ENCODE measurements at regions of chr1 and their contacts with region 1.

Region 1: DNA sequence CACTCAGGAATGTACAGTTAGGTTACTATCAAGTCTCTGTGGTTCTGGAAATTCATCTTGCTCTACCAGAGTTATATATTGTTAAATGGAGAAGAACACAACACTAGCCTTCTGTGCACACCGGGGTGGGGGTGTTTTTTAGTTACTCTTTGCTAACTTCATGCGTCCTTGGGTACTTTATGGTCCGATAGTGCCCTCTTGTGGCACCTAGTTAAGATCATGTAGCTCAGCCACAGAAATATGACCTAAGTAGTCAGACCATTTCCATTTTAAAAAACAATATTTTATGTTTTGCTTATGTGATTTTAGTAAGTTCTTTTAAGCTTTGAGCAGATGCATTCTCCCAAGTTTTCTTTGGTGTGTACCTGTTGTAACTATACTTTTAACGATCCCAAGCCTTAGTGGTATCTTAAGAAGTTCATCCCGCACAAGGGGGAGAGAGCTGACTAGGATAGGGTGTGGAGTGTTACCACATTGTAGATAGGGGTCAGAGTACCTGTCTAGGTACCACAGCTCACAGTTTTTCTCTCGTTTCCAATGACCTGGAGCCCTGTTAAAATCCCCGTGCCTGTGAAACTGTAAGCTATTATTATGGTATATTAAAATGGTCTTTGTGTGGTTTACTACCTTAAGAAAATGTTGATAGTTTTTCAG is 20.6 kb upstream of the SH3D21 start:
- DNase-seq: peak; percentile 41
- ATAC-seq: peak; percentile 96
- H3K4me3 ChIP-seq: no peak overlapping the region
- H3K27ac ChIP-seq: no peak overlapping the region
- H3K4me1 ChIP-seq: no peaks in the 10 kb centered on the region; the same call in 1 of the 2 replicates
- H3K27me3 ChIP-seq: no peaks in the 10 kb centered on the region
- CTCF ChIP-seq: peak; percentile 56 to 78 (median 67)
- EP300 ChIP-seq: no peak
- POLR2A ChIP-seq: no peak
- RAD21 ChIP-seq: peak; percentile 84

Region 2: GRCh38 chr1:36008546-36009197 is 276.9 kb before region 1 on chr1:
- CTCF ChIA-PET with region 1: no interaction called
- POLR2A ChIA-PET with region 1: no interaction called
- RAD21 ChIA-PET with region 1: no interaction called
- SMC1A ChIA-PET with region 1: no interaction called
- in situ Hi-C with region 1: no loop called
- intact Hi-C with region 1: no loop called
- DNase-seq: no peak
- ATAC-seq: no peak
- H3K4me3 ChIP-seq: no peak overlapping the region
- H3K27ac ChIP-seq: no peak overlapping the region
- H3K4me1 ChIP-seq: no peaks in the 10 kb centered on the region
- H3K27me3 ChIP-seq: no peaks in the 10 kb centered on the region
- CTCF ChIP-seq: no peak
- EP300 ChIP-seq: no peak
- POLR2A ChIP-seq: no peak
- RAD21 ChIP-seq: no peak

Region 3: DNA sequence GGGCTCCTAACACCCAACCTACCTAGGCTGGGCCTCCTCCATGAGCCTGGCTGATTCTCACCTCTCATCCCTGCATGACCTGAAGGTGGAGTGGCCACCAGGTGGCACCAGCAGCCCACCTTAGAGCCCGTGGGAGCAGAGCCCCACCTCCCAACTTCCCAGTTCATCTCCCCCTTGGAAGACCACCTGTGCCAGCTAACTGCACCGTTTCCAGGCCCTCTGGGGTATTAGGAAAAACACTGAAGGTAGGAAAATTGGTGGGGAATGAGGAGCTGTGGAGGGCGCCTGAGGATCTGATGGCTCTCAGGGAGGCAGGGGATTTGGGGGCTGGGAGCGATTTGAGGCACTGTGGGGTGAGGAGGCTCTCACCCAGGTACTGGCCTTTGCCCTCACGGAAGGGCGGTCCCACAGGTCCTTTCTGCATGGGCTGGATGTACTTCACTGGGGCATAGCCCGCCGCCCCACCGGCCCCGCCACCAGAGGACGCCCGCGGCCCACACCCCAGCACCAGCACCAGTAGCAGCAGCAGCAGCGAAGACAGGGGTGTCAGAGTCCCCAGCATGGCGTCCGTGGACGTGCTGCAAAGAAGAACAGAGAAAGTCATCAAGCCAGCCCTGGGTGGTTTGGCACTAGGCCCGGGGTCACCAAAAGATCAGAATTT is 185.8 kb before region 1 on chr1:
- CTCF ChIA-PET with region 1: interaction called, 8 read pairs
- POLR2A ChIA-PET with region 1: no interaction called
- RAD21 ChIA-PET with region 1: interaction called, 7 read pairs
- SMC1A ChIA-PET with region 1: interaction called, 8 read pairs
- in situ Hi-C with region 1: loop called (anchors 10 kb)
- intact Hi-C with region 1: loop called (anchors 2 kb)
- DNase-seq: no peak
- ATAC-seq: peak; percentile 96
- H3K4me3 ChIP-seq: no peak overlapping the region
- H3K27ac ChIP-seq: no peak overlapping the region
- H3K4me1 ChIP-seq: no peaks in the 10 kb centered on the region
- H3K27me3 ChIP-seq: no peaks in the 10 kb centered on the region
- CTCF ChIP-seq: peak; percentile 82 to 88 (median 86)
- EP300 ChIP-seq: no peak
- POLR2A ChIP-seq: no peak
- RAD21 ChIP-seq: peak; percentile 95

Region 4: DNA sequence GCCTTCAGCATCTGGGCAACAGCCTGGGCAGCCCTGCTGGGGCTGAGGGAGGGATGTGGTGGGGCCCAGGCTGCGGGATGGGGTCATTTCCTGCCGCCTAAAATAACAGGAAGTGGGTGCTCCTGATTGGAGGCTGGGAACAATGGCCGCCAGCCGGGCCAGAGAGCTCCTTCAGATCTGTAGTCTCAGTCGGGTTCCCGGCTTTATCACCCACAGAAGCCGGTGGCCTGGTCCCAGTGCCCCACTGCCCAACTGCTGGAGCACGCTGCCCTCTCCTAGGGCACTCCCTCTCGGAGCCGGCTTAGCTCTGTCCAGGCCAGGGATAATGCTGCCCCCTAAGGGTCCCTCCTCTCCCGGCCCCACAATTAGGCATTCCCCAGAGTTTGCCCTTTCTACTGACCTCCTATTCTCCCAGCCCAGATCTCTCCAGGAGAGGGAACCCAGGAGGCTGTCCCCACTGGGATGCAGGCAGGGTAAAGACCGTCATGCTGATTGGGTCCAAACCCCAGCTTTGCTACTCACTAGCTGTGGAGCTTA is 124.6 kb before region 1 on chr1:
- CTCF ChIA-PET with region 1: interaction called, 31 read pairs
- POLR2A ChIA-PET with region 1: interaction called, 5 read pairs
- RAD21 ChIA-PET with region 1: interaction called, 12 read pairs
- SMC1A ChIA-PET with region 1: interaction called, 10 read pairs
- in situ Hi-C with region 1: no loop called
- intact Hi-C with region 1: no loop called
- DNase-seq: no peak
- ATAC-seq: peak; percentile 76
- H3K4me3 ChIP-seq: peak overlapping the region; percentile 85
- H3K27ac ChIP-seq: peak overlapping the region; percentile 95
- H3K4me1 ChIP-seq: peaks cover 51% of the 10 kb centered on the region
- H3K27me3 ChIP-seq: no peaks in the 10 kb centered on the region
- CTCF ChIP-seq: peak; percentile 32 to 49 (median 44); a peak in 3 of 6 replicates
- EP300 ChIP-seq: no peak
- POLR2A ChIP-seq: peak; percentile 82
- RAD21 ChIP-seq: no peak

Region 5: DNA sequence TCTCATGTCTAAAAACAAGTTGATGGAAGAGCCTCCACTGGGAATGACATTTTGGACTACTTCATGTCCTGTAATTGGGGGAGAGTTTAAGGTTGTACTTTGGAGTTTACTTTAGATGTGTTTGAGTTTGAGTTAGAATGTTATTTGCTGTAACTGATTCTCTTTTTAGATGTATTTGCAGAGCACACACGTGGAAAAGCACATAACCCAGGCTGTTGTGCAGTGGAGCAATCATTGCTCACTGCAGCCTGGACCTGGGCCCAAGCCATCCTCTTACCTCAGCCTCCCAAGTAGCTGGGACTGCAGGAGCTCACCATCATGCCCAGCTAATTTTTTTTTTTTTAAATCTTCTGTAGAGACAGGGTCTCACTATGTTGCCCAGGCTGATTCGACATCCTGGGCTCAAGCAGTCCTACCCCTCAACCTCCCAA is 16.2 kb before region 1 on chr1:
- CTCF ChIA-PET with region 1: interaction called, 14 read pairs
- POLR2A ChIA-PET with region 1: interaction called, 3 read pairs
- RAD21 ChIA-PET with region 1: no interaction called
- SMC1A ChIA-PET with region 1: interaction called, 4 read pairs
- in situ Hi-C with region 1: no loop called
- intact Hi-C with region 1: no loop called
- DNase-seq: no peak
- ATAC-seq: no peak
- H3K4me3 ChIP-seq: no peak overlapping the region
- H3K27ac ChIP-seq: no peak overlapping the region
- H3K4me1 ChIP-seq: no peaks in the 10 kb centered on the region
- H3K27me3 ChIP-seq: no peaks in the 10 kb centered on the region
- CTCF ChIP-seq: no peak
- EP300 ChIP-seq: no peak
- POLR2A ChIP-seq: no peak
- RAD21 ChIP-seq: no peak

Region 6: DNA sequence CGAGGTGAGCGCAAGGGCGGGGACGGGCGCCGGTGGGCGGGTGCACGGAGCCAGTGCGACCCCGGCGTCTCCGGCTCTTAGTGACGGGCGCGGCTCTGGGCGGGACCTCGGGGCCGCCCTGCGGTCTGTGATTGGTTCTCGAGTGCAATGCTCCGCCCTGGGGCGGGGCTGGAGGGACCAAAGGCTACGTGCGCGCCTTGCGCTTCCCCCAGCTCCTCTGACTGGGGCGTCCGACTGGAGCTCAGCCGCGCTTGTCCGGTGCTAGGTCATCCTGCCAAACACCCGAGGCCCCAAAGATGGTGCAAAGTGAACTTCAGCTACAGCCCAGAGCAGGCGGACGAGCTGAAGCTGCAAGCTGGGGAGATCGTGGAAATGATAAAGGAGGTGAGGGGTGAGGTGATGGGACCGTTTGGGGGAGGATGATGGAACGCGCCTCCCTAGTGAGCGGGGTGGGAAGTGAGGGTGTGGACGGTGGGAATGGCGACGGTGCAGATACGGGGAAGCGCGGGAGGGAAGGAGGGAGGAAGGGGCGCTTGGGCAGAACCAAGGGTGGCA is 21.4 kb after region 1 on chr1:
- CTCF ChIA-PET with region 1: interaction called, 10 read pairs
- POLR2A ChIA-PET with region 1: interaction called, 4 read pairs
- RAD21 ChIA-PET with region 1: interaction called, 3 read pairs
- SMC1A ChIA-PET with region 1: interaction called, 4 read pairs
- in situ Hi-C with region 1: no loop called
- intact Hi-C with region 1: no loop called
- DNase-seq: peak; percentile 80
- ATAC-seq: peak; percentile 99
- H3K4me3 ChIP-seq: peak overlapping the region; percentile 95
- H3K27ac ChIP-seq: peak overlapping the region; percentile 46
- H3K4me1 ChIP-seq: peaks cover 27% of the 10 kb centered on the region
- H3K27me3 ChIP-seq: no peaks in the 10 kb centered on the region
- CTCF ChIP-seq: no peak
- EP300 ChIP-seq: no peak
- POLR2A ChIP-seq: peak; percentile 98
- RAD21 ChIP-seq: no peak